ENCODE measurements at regions of chr7 and their contacts with region 1.

Region 1: DNA sequence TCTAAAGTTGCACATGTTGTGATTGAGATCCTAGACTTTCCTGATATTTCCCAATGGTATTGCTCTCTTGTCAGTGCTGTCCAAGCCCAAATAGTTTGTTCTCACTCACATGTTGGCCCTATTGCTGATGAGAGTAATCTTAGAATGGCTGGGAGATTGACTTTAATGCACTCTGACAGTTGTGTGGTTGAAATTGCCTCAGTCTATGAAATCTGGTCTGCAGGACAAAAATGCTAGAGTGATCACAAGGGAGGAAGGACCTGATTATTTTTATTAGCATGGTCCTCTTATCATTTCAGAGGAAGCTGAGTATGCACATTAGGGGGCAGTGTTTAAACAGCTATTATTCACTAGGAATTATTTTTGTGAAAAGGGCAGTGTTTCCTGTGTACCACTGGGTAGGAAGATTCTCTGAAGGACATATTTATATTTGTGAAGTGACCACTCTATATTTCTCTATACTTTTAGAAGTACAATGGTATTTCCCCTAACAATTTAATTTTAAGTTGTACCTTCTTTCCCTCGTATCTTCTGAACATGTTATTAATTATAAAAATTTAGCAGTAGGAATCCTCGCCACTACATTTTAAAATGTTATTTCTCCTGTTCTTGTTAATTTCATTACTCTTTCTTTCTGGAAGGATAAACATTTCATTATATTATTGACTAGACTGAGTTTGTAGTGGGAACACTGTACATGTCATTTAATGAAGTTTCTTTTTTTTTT is 64.4 kb downstream of the SUGCT start:
- DNase-seq: peak; percentile 51
- H3K4me3 ChIP-seq: no peak overlapping the region
- H3K27ac ChIP-seq: no peak overlapping the region
- H3K4me1 ChIP-seq: peaks cover 2% of the 10 kb centered on the region
- H3K27me3 ChIP-seq: no peaks in the 10 kb centered on the region
- CTCF ChIP-seq: peak; percentile 22 to 28
- POLR2A ChIP-seq: no peak

Region 2: DNA sequence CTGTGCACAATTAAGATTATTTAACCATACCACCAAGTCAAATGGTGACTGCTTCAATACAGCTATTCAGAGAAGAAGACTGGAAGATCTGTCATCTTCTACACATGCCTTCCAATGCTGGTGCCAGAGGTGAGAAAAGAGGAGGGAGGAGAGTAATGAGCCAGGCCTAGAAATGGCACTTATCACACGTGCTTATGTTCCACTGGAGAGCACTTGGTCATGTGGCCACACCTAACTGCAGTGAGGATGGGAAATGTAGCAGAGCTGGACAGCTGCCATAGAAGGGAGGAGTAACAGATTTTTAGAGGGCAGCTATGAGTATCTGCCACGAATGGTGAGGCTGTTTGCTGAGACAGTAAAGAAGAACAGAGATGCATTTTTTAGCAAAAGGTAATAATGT is 141.9 kb before region 1 on chr7:
- CTCF ChIA-PET with region 1: no interaction called
- POLR2A ChIA-PET with region 1: no interaction called
- dilution Hi-C with region 1: no loop called
- intact Hi-C with region 1: no loop called
- DNase-seq: no peak
- H3K4me3 ChIP-seq: no peak overlapping the region
- H3K27ac ChIP-seq: no peak overlapping the region
- H3K4me1 ChIP-seq: no peaks in the 10 kb centered on the region
- H3K27me3 ChIP-seq: no peaks in the 10 kb centered on the region
- CTCF ChIP-seq: no peak
- POLR2A ChIP-seq: no peak

Region 3: GRCh38 chr7:40221836-40222235 is 22.6 kb after region 1 on chr7:
- CTCF ChIA-PET with region 1: interaction called, 10 read pairs
- POLR2A ChIA-PET with region 1: no interaction called
- dilution Hi-C with region 1: no loop called
- intact Hi-C with region 1: no loop called
- DNase-seq: no peak
- H3K4me3 ChIP-seq: no peak overlapping the region
- H3K27ac ChIP-seq: peak overlapping the region; percentile 67
- H3K4me1 ChIP-seq: peaks cover 19% of the 10 kb centered on the region
- H3K27me3 ChIP-seq: no peaks in the 10 kb centered on the region
- CTCF ChIP-seq: no peak
- POLR2A ChIP-seq: no peak